B cell (primary cell): ENCODE measurements at regions of chr18 and their contacts with region 1.

Region 1: DNA sequence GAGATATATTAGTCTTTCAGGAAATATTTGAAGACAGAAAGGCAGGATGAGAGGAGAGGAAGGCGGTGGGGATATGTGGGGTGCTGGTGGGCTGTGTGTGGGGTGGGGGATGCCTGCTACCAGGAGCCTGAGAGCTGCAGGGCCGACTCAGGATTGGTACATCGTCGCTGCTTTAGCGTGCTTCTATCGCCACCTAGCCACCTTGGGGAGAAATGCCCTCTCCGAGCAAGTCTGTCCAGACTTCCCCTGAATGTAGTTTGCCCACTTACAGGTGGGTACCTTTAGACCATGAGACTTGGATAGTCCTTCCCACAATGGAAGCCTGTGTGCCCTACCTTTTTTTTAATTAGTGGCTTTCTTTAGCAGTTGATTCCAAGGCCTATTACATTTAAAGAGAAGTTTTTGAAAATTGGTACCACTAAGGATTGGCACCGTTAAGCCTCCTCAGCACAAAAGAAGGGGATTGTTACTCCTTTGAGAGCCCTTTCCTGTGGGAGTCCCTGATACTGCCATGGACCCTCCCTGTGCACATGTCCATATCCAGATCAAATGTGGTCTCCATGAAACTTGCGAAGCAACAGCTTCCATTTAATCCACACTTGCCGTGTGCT is 114.1 kb upstream of the NDUFV2 start:
- DNase-seq: peak; percentile 76
- ATAC-seq: peak; percentile 79
- H3K4me3 ChIP-seq: no peak overlapping the region
- H3K4me3 Mint-ChIP-seq: no peak overlapping the region
- H3K27ac ChIP-seq: no peak overlapping the region
- H3K27ac Mint-ChIP-seq: no peak overlapping the region
- H3K4me1 ChIP-seq: no peaks in the 10 kb centered on the region
- H3K4me1 Mint-ChIP-seq: no peaks in the 10 kb centered on the region
- H3K27me3 ChIP-seq: no peaks in the 10 kb centered on the region
- H3K27me3 Mint-ChIP-seq: peaks cover 7% of the 10 kb centered on the region
- CTCF ChIP-seq: peak; percentile 89

Region 2: DNA sequence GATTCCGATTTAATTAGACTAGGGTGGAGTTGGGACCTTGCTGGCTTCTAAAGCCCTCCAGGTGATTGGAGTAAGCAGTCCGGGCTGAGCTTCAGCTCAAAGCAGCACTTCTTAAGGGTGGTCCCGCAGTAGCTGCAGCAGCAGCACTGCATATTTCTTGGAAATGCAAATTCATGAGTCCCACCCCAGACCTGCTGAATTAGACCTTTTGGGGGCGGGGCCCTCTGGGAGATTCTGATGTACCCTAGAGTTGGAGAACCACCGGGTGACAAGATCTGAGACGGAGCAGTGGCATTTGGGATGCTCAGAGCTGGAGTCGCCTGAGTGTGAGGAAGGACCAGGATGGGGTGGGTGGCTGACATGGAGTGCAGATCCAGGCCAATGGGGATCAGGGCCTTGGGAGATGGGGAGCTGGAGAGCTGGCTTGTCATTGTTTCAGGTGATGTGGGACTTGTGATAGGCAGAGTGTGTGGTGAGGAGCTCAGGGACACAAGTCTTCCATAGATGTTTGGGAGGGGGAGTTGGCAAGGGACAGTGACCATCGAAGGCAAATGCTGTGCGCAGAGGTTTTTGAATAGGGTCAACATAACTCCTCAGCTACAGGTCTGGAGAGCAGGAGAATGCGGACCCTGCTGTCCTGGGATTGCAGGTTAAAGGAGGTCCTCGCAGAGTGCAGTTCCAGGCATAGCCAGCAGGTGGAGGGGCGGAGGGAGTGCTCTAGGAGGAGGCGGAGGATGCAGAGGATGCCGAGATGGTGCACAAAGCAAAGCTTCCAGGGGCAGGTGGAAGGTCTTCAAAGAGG is 510.0 kb before region 1 on chr18:
- CTCF ChIA-PET with region 1: interaction called, 64 read pairs
- POLR2A ChIA-PET with region 1: interaction called, 3 read pairs
- intact Hi-C with region 1: no loop called
- DNase-seq: peak; percentile 74
- ATAC-seq: peak; percentile 80
- H3K4me3 ChIP-seq: no peak overlapping the region
- H3K4me3 Mint-ChIP-seq: no peak overlapping the region
- H3K27ac ChIP-seq: no peak overlapping the region
- H3K27ac Mint-ChIP-seq: no peak overlapping the region
- H3K4me1 ChIP-seq: no peaks in the 10 kb centered on the region
- H3K4me1 Mint-ChIP-seq: peaks cover 3% of the 10 kb centered on the region
- H3K27me3 ChIP-seq: peaks cover 0 to 7% (median 0%) of the 10 kb centered on the region in 4 experiments
- H3K27me3 Mint-ChIP-seq: peaks cover 47% of the 10 kb centered on the region
- CTCF ChIP-seq: peak; percentile 80

Region 3: DNA sequence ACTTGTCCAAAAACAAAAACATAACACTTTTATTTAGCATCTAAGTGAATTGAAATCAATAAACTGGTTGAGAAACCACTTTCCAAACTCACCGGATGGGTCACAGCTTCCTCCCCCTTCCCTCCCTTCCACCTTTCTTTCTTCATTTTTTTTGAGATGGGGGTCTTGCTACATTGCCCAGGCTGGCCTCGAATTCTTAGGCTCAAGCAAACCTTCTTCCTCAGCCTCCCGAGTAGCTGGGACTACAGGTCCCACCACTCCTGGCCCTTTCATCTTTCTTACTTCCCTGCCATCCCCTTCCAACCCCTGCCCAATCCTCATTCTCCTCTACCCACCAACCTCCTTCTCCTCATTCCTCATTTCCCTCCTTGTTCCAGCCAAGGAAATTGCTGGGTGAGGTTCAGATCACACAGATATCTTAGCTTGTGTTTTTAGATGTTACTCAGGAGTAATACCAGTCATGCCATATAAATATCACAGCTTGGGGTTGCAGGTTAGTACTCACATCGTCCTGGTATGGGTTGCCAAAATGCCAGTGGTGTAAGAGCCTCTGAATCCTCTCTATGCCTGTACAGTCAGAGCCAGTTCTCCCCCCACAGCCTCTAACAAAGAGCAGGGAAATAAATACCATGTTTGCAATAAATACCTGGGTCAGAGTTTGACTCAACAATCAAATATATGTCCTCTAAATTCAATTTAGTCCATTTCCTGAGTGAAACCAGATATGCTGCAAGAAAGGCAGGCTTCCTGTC is 18.6 kb before region 1 on chr18:
- CTCF ChIA-PET with region 1: interaction called, 10 read pairs
- POLR2A ChIA-PET with region 1: no interaction called
- intact Hi-C with region 1: no loop called
- DNase-seq: no peak
- ATAC-seq: no peak
- H3K4me3 ChIP-seq: no peak overlapping the region
- H3K4me3 Mint-ChIP-seq: no peak overlapping the region
- H3K27ac ChIP-seq: no peak overlapping the region
- H3K27ac Mint-ChIP-seq: no peak overlapping the region
- H3K4me1 ChIP-seq: peaks cover 21 to 22% of the 10 kb centered on the region in 2 donors
- H3K4me1 Mint-ChIP-seq: peaks cover 24% of the 10 kb centered on the region
- H3K27me3 ChIP-seq: no peaks in the 10 kb centered on the region
- H3K27me3 Mint-ChIP-seq: peaks cover 3% of the 10 kb centered on the region
- CTCF ChIP-seq: no peak

Region 4: GRCh38 chr18:8998481-8999217 is 10.3 kb after region 1 on chr18:
- CTCF ChIA-PET with region 1: interaction called, 22 read pairs
- POLR2A ChIA-PET with region 1: no interaction called
- intact Hi-C with region 1: no loop called
- DNase-seq: no peak
- ATAC-seq: no peak
- H3K4me3 ChIP-seq: no peak overlapping the region
- H3K4me3 Mint-ChIP-seq: no peak overlapping the region
- H3K27ac ChIP-seq: no peak overlapping the region
- H3K27ac Mint-ChIP-seq: no peak overlapping the region
- H3K4me1 ChIP-seq: no peaks in the 10 kb centered on the region
- H3K4me1 Mint-ChIP-seq: no peaks in the 10 kb centered on the region
- H3K27me3 ChIP-seq: peaks cover 0 to 4% (median 2%) of the 10 kb centered on the region in 4 experiments
- H3K27me3 Mint-ChIP-seq: peaks cover 24% of the 10 kb centered on the region
- CTCF ChIP-seq: no peak

Region 5: DNA sequence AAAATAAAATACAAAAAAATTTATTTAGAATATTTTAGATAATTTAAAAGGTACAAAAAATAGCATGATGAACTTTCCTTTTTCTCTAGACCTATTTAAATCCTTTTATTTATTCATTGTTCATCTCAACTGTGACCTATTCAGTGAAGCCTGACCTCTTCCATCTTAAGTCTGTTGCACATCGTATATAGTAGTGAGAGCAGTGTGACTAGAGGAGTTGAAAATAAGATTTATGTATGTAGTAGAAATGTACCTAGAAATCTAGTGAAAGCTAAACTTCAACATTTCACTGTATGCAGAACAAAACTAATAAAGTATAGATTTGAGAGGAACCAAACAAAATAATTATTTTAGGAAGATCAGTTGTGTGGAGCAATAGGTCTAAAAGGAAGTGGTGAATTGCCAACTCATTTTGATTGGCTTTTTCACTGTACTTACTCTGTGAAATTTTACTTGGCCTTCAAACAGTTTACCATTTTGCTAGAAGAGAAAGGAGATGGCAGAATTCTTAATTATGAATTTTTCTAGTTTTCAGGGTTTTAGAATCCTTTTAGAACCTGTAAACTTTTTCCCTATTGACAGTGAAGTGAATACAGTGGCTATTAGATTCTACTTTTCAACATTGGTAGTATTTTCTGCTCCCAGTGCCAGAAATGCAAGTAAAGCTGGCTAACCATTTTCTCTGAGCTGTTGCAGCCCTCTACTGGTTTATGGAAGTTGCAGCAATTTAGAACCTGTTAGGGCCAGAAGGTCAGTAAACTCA is 159.3 kb after region 1 on chr18:
- CTCF ChIA-PET with region 1: no interaction called
- POLR2A ChIA-PET with region 1: no interaction called
- intact Hi-C with region 1: loop called (anchors 2 kb)
- DNase-seq: peak; percentile 72
- ATAC-seq: peak; percentile 60
- H3K4me3 ChIP-seq: no peak overlapping the region
- H3K4me3 Mint-ChIP-seq: peak overlapping the region; percentile 58
- H3K27ac ChIP-seq: peak overlapping the region; percentile 35 to 48
- H3K27ac Mint-ChIP-seq: peak overlapping the region; percentile 74
- H3K4me1 ChIP-seq: peaks cover 63 to 68% of the 10 kb centered on the region in 2 donors
- H3K4me1 Mint-ChIP-seq: peaks cover 72% of the 10 kb centered on the region
- H3K27me3 ChIP-seq: no peaks in the 10 kb centered on the region
- H3K27me3 Mint-ChIP-seq: no peaks in the 10 kb centered on the region
- CTCF ChIP-seq: peak; percentile 76